Mammary epithelial cell (primary cell): ENCODE measurements at regions of chr16 and their contacts with region 1.

Region 1: DNA sequence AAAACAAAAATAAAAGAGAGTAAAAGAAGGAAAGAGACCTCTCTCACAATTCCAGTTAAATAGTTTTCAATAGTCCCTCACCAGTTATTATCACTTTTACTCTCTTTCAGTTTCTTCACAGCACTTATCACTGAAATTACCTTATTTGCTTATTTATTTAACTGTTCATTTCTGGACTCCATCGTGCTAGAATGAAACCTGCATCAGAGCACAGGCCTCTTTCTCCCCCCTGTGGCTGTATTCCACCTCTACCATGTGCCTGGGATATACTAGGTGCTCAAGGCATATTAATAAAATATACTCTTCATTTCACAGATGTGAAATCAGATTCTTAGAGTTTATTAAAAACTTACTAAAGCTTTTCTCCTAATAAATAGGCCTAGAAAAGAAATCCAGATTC is 308.9 kb upstream of the MON1B start:
- DNase-seq: no peak
- H3K4me3 ChIP-seq: no peak overlapping the region
- H3K27ac ChIP-seq: no peak overlapping the region
- H3K4me1 ChIP-seq: no peaks in the 10 kb centered on the region
- H3K27me3 ChIP-seq: no peaks in the 10 kb centered on the region
- CTCF ChIP-seq: peak; percentile 33 to 54

Region 2: DNA sequence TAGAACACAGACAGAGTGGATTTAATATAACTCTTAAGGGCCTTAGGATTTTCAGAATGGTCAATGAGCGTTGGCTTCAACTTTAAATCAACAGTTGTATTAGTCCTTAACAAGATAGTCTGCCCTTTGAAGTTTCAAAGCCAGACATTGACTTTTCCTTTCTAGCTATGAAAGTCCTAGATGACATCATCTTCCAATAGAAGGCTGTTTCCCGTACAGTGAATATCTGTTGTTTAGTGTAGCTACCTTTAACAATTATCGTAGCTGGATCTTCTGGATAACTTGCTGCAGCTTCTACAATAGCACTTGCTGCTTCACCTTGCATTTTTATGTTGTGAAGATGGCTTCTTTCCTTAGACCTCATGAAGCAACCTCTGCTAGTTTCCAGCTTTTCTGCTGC is 730.2 kb before region 1 on chr16:
- CTCF ChIA-PET with region 1: no interaction called
- dilution Hi-C with region 1: no loop called
- in situ Hi-C with region 1: no loop called
- intact Hi-C with region 1: no loop called
- DNase-seq: no peak
- H3K4me3 ChIP-seq: no peak overlapping the region
- H3K27ac ChIP-seq: no peak overlapping the region
- H3K4me1 ChIP-seq: no peaks in the 10 kb centered on the region
- H3K27me3 ChIP-seq: no peaks in the 10 kb centered on the region
- CTCF ChIP-seq: no peak

Region 3: DNA sequence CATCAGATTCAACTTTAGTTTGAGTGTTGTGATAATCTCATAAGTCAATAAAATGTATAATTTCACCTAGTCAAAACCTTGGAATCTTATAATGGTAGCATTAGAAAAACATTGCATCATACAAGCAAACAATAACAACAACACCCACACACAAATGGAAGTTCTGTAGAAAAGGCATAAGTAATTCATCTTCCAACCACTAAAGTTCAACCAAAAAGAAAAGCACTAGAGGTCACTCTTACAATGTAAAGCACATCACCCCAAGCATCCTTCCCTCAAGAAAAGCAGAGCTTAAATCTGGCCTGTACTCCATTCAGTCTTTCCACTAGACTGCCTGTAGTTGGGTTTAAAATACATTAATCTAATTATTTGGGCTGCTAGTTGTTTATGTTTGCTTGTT is 603.1 kb before region 1 on chr16:
- CTCF ChIA-PET with region 1: no interaction called
- dilution Hi-C with region 1: no loop called
- in situ Hi-C with region 1: no loop called
- intact Hi-C with region 1: loop called (anchors 2 kb)
- DNase-seq: peak; percentile 7
- H3K4me3 ChIP-seq: no peak overlapping the region
- H3K27ac ChIP-seq: no peak overlapping the region
- H3K4me1 ChIP-seq: no peaks in the 10 kb centered on the region
- H3K27me3 ChIP-seq: peaks cover 4% of the 10 kb centered on the region
- CTCF ChIP-seq: peak; percentile 7 to 42

Region 4: GRCh38 chr16:76541070-76541469 is 341.0 kb before region 1 on chr16:
- CTCF ChIA-PET with region 1: no interaction called
- dilution Hi-C with region 1: no loop called
- in situ Hi-C with region 1: no loop called
- intact Hi-C with region 1: loop called (anchors 10 kb)
- DNase-seq: no peak
- H3K4me3 ChIP-seq: no peak overlapping the region
- H3K27ac ChIP-seq: no peak overlapping the region
- H3K4me1 ChIP-seq: no peaks in the 10 kb centered on the region
- H3K27me3 ChIP-seq: no peaks in the 10 kb centered on the region
- CTCF ChIP-seq: no peak

Region 5: GRCh38 chr16:76639685-76640289 is 242.3 kb before region 1 on chr16:
- CTCF ChIA-PET with region 1: no interaction called
- dilution Hi-C with region 1: no loop called
- in situ Hi-C with region 1: no loop called
- intact Hi-C with region 1: loop called (anchors 1 kb)
- DNase-seq: peak; percentile 47
- H3K4me3 ChIP-seq: no peak overlapping the region
- H3K27ac ChIP-seq: no peak overlapping the region
- H3K4me1 ChIP-seq: no peaks in the 10 kb centered on the region
- H3K27me3 ChIP-seq: no peaks in the 10 kb centered on the region
- CTCF ChIP-seq: peak; percentile 27 to 38

Region 6: DNA sequence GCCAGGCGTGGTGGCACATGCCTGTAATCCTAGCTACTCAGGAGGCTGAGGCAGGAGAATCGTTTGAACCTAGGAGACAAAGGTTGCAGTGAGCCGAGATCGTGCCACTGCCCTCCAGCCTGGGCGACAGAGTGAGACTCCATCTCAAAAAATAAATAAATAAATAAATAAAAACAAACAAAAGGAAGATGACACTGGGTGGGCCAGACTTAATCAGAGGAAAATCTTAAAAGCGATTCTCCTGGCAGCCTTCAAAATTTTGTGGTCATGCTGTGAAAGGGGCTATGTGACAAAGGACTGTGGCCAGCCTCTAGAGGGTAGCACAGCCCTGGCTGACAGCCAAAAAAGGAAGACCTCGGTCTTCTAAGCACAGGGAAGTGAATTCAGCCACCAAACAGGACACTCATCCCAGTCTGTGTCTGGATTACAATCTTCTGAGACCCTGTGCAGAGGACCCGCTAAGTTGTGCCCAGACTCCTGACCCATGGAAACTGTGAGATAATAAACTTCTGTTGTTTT is 213.8 kb before region 1 on chr16:
- CTCF ChIA-PET with region 1: no interaction called
- dilution Hi-C with region 1: no loop called
- in situ Hi-C with region 1: no loop called
- intact Hi-C with region 1: loop called (anchors 5 kb)
- DNase-seq: no peak
- H3K4me3 ChIP-seq: no peak overlapping the region
- H3K27ac ChIP-seq: no peak overlapping the region
- H3K4me1 ChIP-seq: no peaks in the 10 kb centered on the region
- H3K27me3 ChIP-seq: no peaks in the 10 kb centered on the region
- CTCF ChIP-seq: no peak

Region 7: DNA sequence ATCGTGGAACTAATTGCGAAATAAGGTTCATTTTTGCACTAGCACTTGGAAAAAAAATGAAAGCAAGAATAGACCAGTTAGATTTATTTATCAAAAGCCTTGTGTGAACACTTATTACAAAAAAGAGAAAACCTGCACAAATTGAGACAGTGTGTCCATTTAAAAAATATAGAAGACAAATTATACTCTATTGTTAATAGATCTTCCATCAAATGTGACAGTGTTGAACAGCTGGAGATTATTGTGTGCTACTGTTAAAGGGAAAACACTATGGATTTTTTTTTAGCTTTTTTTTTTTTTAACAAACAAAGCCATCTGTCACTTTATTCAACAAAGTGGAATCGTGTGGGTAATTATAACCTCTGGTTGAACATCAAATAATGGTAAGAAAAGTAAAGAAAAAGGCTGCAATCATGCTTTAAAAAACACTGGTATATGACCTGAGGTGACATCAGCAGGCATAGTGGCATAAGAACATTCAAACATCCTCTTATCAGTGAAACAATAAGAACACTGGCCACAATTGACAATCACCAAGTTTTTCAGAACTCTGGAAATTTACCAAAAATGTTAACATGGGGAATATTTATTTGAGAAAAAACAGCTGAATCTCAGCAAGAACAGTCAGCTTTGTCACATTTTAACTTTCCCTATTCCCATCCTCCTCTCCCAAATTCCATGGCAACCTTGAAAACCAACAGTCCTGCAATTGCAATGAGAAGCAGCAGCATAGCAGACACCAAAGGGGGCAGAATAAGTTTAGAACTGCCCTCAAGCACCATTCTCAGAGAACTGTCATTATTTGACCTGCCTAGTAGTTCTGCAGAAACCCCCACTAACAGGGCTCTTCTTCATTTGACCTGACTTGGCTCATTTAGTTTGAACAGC is 133.4 kb before region 1 on chr16:
- CTCF ChIA-PET with region 1: no interaction called
- dilution Hi-C with region 1: no loop called
- in situ Hi-C with region 1: no loop called
- intact Hi-C with region 1: loop called (anchors 1 kb)
- DNase-seq: no peak
- H3K4me3 ChIP-seq: no peak overlapping the region
- H3K27ac ChIP-seq: no peak overlapping the region
- H3K4me1 ChIP-seq: no peaks in the 10 kb centered on the region
- H3K27me3 ChIP-seq: no peaks in the 10 kb centered on the region
- CTCF ChIP-seq: no peak

Region 8: GRCh38 chr16:76768948-76769347 is 113.1 kb before region 1 on chr16:
- CTCF ChIA-PET with region 1: no interaction called
- dilution Hi-C with region 1: no loop called
- in situ Hi-C with region 1: no loop called
- intact Hi-C with region 1: no loop called
- DNase-seq: no peak
- H3K4me3 ChIP-seq: no peak overlapping the region
- H3K27ac ChIP-seq: no peak overlapping the region
- H3K4me1 ChIP-seq: no peaks in the 10 kb centered on the region
- H3K27me3 ChIP-seq: no peaks in the 10 kb centered on the region
- CTCF ChIP-seq: no peak

Region 9: GRCh38 chr16:77009453-77009852 is 127.4 kb after region 1 on chr16:
- CTCF ChIA-PET with region 1: no interaction called
- dilution Hi-C with region 1: no loop called
- in situ Hi-C with region 1: no loop called
- intact Hi-C with region 1: no loop called
- DNase-seq: no peak
- H3K4me3 ChIP-seq: no peak overlapping the region
- H3K27ac ChIP-seq: no peak overlapping the region
- H3K4me1 ChIP-seq: no peaks in the 10 kb centered on the region
- H3K27me3 ChIP-seq: no peaks in the 10 kb centered on the region
- CTCF ChIP-seq: no peak